GM18951 (cell line): ENCODE measurements at regions of chr22 and their contacts with region 1.

Region 1: DNA sequence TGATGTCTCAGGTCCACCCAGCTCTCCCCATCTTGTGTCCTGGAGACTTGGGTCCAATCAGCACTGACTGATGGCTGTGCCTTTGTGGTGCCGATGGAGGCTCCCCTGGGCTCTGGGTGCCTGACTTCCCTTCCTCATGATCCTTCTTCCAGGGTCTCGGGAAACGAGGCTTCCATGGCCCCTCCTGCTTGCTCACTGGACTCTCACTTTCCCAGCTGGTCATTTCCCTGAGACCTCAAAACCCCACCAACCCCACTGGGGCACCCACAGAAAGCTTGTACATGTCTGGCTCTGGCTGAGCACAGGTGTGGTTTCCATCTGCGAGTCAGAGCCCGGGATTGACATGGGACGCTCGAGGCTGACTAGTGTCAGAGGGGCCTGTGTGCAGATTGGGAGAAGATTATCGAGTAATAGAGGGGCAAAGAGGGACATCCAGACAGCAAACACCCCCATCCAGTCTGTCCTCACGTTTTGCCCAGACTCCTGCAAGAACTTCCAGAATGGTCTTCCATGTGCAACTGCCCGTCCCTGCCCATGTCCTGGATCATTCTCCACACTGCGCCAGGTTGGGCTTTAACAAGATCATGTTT is 15.1 kb downstream of the APOL1 start:
- POLR2A ChIP-seq: no peak

Region 2: DNA sequence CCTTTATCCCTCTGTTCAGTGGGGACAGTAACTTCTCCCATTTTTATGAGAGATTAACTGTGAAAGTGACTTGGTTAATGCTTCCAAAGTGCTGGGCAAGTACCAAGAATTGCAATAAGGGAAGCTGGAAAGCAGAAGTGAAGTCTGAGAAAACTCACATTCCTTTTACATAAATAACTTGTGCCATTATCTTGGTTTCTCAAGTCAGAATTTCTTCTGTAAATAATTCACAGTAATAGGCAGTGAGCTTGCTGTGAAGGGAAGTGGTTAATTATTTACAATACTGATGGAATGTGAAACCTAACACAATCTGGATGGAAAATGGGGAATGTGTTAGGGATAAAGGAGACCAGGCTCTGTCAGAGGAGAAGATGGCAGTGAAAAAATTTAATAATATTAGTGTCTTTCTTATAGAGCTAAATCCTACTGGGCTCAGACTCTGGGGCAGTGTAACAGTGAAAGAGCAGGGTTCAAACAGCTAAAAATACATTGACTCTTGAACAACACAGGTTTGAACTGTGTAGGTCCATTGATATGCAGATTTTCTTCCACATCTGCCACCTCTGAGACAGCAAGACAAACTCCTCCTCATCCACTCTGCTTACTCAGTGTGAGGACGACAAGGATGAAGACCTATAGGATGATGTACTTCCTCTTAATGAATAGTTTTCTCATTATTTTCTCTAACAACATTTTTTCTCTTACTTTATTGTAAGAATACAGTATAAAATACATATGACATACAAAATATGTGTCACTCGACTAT is 1453.5 kb before region 1 on chr22:
- in situ Hi-C with region 1: no loop called
- POLR2A ChIP-seq: no peak

Region 3: DNA sequence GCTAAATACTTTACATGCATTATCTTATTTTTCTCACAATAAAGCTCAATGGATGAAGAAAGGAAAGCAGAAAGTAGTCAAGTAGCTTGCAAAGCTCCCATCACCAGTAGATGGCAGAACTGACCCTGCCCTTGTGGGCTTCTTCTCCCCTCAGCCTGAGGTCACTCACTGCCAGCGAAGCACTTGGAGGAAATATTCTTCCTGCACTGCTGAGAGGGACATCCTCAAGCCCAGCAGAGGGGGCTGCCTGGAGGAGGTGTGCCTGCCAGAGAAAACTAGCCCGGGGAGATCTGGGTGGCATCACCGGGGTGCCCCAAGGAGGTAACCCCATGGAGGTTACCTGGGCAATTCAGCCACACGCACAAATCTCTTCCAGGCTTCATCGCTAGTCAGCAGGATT is 73.0 kb before region 1 on chr22:
- in situ Hi-C with region 1: loop called (anchors 5 kb)
- POLR2A ChIP-seq: no peak

Region 4: GRCh38 chr22:36239401-36240171 is 28.4 kb before region 1 on chr22 and contains the start of gene APOL2:
- in situ Hi-C with region 1: no loop called
- POLR2A ChIP-seq: peak; percentile 66

Region 5: GRCh38 chr22:36454916-36455570 is 187.1 kb after region 1 on chr22:
- in situ Hi-C with region 1: no loop called
- POLR2A ChIP-seq: peak; percentile 67

Region 6: GRCh38 chr22:36569999-36570398 is 302.0 kb after region 1 on chr22:
- in situ Hi-C with region 1: no loop called
- POLR2A ChIP-seq: no peak